IMR-90 (cell line): ENCODE measurements at regions of chr10 and their contacts with region 1.

Region 1: GRCh38 chr10:102917962-102918816 is at the start of gene CNNM2:
- DNase-seq: peak; percentile 100
- ATAC-seq: peak; percentile 94
- H3K4me3 ChIP-seq: peak within 1 kb of the TSS; percentile 72
- H3K27ac ChIP-seq: peak within 1 kb of the TSS; percentile 91
- H3K4me1 ChIP-seq: no peaks in the 10 kb centered on the region
- H3K27me3 ChIP-seq: no peaks in the 10 kb centered on the region
- CTCF ChIP-seq: no peak
- POLR2A ChIP-seq: peak; percentile 78
- RAD21 ChIP-seq: peak; percentile 10; the same call in 1 of the 2 replicates
- total RNA-seq, gene CNNM2: 5.6 and 6.4 TPM in 2 replicates

Region 2: GRCh38 chr10:102962951-102963755 is 45.0 kb after region 1 on chr10:
- CTCF ChIA-PET with region 1: interaction called, 6 read pairs
- POLR2A ChIA-PET with region 1: no interaction called
- dilution Hi-C with region 1: no loop called
- in situ Hi-C with region 1: no loop called
- intact Hi-C with region 1: loop called (anchors 2 kb)
- DNase-seq: peak; percentile 37
- ATAC-seq: peak; percentile 54
- H3K4me3 ChIP-seq: no peak overlapping the region
- H3K27ac ChIP-seq: peak overlapping the region; percentile 71; the same call in 1 of the 2 replicates
- H3K4me1 ChIP-seq: peaks cover 14% of the 10 kb centered on the region
- H3K27me3 ChIP-seq: no peaks in the 10 kb centered on the region
- CTCF ChIP-seq: no peak
- POLR2A ChIP-seq: no peak
- RAD21 ChIP-seq: no peak

Region 3: DNA sequence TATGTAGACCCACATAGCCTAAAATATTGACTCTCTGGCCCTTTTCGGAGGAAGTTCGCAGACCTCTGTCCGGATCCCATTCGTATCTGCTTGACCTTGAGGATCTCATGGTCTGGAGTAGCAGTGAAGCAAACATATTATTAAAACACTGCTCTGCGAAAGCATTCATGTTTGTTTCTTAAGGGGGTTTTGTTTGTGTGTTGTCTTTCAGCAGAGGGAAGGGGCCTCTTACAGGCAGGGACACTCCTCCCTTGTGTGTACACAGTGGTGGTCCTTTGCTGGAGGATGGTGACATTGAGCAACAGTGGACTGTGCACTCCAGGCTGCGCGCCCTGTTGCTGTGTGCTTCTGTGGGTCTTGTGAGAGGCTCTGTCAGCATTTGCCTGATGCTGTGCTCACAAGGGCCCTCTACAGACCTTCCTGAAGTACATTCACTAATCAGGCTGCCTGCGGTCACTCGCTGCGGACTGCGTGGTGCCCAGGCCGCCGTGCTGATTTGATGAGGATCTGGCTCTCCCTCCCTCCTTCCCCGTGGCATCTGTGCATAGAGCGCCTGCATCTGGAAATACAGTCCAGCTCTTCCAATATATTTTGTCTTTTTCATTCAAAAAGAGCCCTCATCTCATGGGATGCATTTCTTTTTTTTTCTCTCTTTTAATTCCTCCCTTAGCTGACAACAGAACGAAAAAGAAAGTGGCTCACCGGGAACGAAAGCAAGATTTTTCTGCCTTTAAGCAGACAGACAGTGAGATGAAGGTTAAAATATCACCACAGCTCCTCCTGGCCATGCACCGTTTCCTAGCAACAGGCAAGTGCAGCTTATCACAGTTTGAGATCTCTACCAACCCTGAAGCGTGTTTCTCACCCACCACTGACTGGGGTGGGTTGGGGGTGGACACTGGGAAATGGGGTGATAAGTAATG is 135.7 kb after region 1 on chr10:
- CTCF ChIA-PET with region 1: interaction called, 4 read pairs
- POLR2A ChIA-PET with region 1: no interaction called
- dilution Hi-C with region 1: no loop called
- in situ Hi-C with region 1: no loop called
- intact Hi-C with region 1: loop called (anchors 1 kb)
- DNase-seq: peak; percentile 88
- ATAC-seq: peak; percentile 94
- H3K4me3 ChIP-seq: peak overlapping the region; percentile 1; the same call in 1 of the 2 replicates
- H3K27ac ChIP-seq: peak overlapping the region; percentile 33; the same call in 1 of the 2 replicates
- H3K4me1 ChIP-seq: peaks cover 15% of the 10 kb centered on the region
- H3K27me3 ChIP-seq: no peaks in the 10 kb centered on the region
- CTCF ChIP-seq: peak; percentile 56
- POLR2A ChIP-seq: no peak
- RAD21 ChIP-seq: peak; percentile 70

Region 4: DNA sequence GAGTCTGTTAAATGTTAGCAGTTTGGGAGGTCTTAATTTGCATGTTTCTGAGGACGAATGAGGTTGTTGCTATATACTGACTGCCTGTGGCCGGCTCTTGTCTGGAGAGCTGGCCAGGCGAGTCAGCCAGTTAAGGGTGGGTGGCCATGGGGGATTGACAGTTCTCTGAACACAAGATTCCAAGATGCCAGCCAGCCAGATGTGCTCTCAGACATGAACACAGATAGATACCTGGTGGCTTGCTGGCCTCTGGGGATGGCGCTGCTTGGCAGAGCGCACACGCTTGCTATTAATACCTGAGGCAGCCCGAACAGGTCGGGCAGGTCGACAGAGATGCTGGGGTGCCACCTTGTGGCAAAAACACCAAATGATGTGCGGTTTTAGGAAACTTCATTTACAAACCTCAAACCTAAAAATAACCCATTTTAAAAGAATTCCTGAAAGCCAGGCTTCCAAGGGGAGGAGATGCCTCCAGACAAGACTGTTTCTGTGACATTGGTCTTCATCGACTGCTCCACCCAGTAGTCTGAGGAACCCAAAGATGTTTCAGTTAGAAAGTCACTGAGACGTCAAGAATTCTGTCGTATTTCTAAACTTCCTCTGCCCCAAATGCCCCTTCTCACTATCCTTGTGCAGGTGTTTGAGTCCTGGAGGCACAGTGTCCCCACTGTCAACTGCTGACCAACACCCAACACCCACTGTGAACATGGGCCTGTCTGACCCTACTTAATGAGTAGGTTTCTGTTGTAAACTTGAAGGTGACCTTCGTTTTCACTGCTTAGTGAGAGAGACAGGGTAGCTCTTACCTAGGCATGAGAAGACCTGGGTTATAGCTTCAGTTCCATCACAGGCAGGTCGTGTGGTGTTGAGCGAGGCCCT is 151.5 kb after region 1 on chr10:
- CTCF ChIA-PET with region 1: interaction called, 5 read pairs
- POLR2A ChIA-PET with region 1: no interaction called
- dilution Hi-C with region 1: no loop called
- in situ Hi-C with region 1: loop called (anchors 5 kb)
- intact Hi-C with region 1: loop called (anchors 1 kb)
- DNase-seq: peak; percentile 68
- ATAC-seq: peak; percentile 72
- H3K4me3 ChIP-seq: no peak overlapping the region
- H3K27ac ChIP-seq: no peak overlapping the region
- H3K4me1 ChIP-seq: peaks cover 4% of the 10 kb centered on the region; the same call in 1 of the 2 replicates
- H3K27me3 ChIP-seq: no peaks in the 10 kb centered on the region
- CTCF ChIP-seq: peak; percentile 79
- POLR2A ChIP-seq: no peak
- RAD21 ChIP-seq: peak; percentile 89

Region 5: GRCh38 chr10:103238506-103239252 is 320.5 kb after region 1 on chr10:
- CTCF ChIA-PET with region 1: interaction called, 10 read pairs
- POLR2A ChIA-PET with region 1: interaction called, 10 read pairs
- dilution Hi-C with region 1: no loop called
- in situ Hi-C with region 1: loop called (anchors 5 kb)
- intact Hi-C with region 1: no loop called
- DNase-seq: peak; percentile 61
- ATAC-seq: peak; percentile 86
- H3K4me3 ChIP-seq: no peak overlapping the region
- H3K27ac ChIP-seq: no peak overlapping the region
- H3K4me1 ChIP-seq: peaks cover 10% of the 10 kb centered on the region
- H3K27me3 ChIP-seq: no peaks in the 10 kb centered on the region
- CTCF ChIP-seq: peak; percentile 58
- POLR2A ChIP-seq: no peak
- RAD21 ChIP-seq: peak; percentile 64

Region 6: DNA sequence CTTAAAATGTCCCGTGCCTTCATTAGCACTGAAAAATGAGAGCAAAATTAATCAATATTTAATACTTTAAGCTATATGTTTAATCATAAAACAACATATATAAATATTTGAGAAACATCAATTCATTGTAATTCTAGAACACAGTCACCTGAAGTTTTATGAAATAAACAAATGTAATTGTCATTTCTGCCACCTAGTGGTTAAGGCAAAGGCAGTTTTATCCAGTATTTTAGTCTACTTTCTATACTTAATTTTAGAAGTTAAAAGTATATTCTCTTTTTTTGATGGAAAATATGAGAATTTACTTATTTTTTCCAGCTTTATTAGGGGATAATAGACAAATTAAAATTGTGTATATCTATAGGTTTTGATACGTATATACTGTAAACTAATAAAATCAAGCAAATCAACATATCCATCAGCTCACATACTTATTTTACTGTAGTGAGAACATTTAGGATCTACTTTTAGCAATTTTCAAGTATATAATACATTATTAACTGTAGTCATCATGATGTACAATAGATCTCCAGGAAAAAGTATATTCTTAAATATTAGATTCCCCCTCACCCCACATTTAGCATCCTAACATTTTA is 415.8 kb after region 1 on chr10:
- CTCF ChIA-PET with region 1: no interaction called
- POLR2A ChIA-PET with region 1: no interaction called
- dilution Hi-C with region 1: no loop called
- in situ Hi-C with region 1: no loop called
- intact Hi-C with region 1: loop called (anchors 1 kb)
- DNase-seq: peak; percentile 33
- ATAC-seq: no peak
- H3K4me3 ChIP-seq: no peak overlapping the region
- H3K27ac ChIP-seq: no peak overlapping the region
- H3K4me1 ChIP-seq: no peaks in the 10 kb centered on the region
- H3K27me3 ChIP-seq: no peaks in the 10 kb centered on the region
- CTCF ChIP-seq: peak; percentile 60
- POLR2A ChIP-seq: no peak
- RAD21 ChIP-seq: peak; percentile 35